Activated CD4-positive, alpha-beta memory T cell treated with anti-CD3 and anti-CD28 coated beads, Interleukin-2, amount 10 ng/mL, durations not matched to agents 7 days and 5 days (primary cell): ENCODE measurements at regions of chr6 and their contacts with region 1.

Region 1: DNA sequence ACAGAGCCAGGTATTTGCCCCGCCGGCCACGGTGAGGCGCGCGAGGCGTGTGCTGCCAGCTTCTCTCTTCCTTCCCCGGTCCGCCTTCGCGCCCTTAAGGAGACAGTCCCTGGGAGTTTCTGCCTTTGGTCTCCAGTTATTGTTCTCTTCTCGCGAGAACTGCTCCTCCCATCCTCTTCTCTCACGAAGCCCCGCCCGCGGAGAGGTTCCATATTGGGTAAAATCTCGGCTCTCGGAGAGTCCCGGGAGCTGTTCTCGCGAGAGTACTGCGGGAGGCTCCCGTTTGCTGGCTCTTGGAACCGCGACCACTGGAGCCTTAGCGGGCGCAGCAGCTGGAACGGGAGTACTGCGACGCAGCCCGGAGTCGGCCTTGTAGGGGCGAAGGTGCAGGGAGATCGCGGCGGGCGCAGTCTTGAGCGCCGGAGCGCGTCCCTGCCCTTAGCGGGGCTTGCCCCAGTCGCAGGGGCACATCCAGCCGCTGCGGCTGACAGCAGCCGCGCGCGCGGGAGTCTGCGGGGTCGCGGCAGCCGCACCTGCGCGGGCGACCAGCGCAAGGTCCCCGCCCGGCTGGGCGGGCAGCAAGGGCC is at the start of gene MAPK14:
- DNase-seq: peak; percentile 99
- H3K4me3 Mint-ChIP-seq: peak within 1 kb of the TSS; percentile 83
- H3K27ac Mint-ChIP-seq: peak within 1 kb of the TSS; percentile 89
- H3K4me1 Mint-ChIP-seq: peaks cover 37% of the 10 kb centered on the region
- H3K27me3 Mint-ChIP-seq: peaks cover 24% of the 10 kb centered on the region
- total RNA-seq, gene MAPK14: 71.4 to 72.2 TPM

Region 2: GRCh38 chr6:35920793-35921732 is 106.5 kb before region 1 on chr6 and contains the start of gene SRPK1:
- CTCF ChIA-PET with region 1: interaction called, 5 read pairs
- POLR2A ChIA-PET with region 1: interaction called, 22 read pairs
- DNase-seq: peak; percentile 90
- H3K4me3 Mint-ChIP-seq: peak within 1 kb of the TSS; percentile 95
- H3K27ac Mint-ChIP-seq: peak within 1 kb of the TSS; percentile 90
- H3K4me1 Mint-ChIP-seq: peaks cover 41% of the 10 kb centered on the region
- H3K27me3 Mint-ChIP-seq: no peaks in the 10 kb centered on the region
- total RNA-seq, gene SRPK1: 83.0 to 85.4 TPM

Region 3: GRCh38 chr6:36073587-36073986 is 46.0 kb after region 1 on chr6:
- CTCF ChIA-PET with region 1: interaction called, 11 read pairs
- POLR2A ChIA-PET with region 1: interaction called, 5 read pairs
- DNase-seq: no peak
- H3K4me3 Mint-ChIP-seq: no peak overlapping the region
- H3K27ac Mint-ChIP-seq: no peak overlapping the region
- H3K4me1 Mint-ChIP-seq: peaks cover 3% of the 10 kb centered on the region
- H3K27me3 Mint-ChIP-seq: no peaks in the 10 kb centered on the region

Region 4: DNA sequence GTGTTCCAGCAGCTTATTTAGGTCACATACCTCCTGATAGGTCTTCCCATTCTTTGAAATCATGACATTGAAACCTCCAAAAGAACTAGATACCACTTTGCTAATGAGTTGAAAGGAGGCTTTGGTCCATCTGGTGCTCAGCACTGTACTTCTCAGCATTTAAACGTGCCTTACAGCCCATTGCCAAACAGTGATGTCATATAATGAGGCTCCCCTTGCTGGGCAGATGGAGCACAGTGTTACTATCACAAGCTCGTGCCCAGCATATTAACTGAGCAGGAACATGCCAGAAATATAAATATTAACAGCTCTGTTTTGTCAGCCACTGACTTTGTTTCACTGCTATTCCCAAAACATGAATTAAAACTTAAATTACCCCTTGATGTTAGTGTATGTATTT is 77.2 kb after region 1 on chr6:
- CTCF ChIA-PET with region 1: interaction called, 6 read pairs
- POLR2A ChIA-PET with region 1: interaction called, 24 read pairs
- DNase-seq: no peak
- H3K4me3 Mint-ChIP-seq: no peak overlapping the region
- H3K27ac Mint-ChIP-seq: no peak overlapping the region
- H3K4me1 Mint-ChIP-seq: peaks cover 35% of the 10 kb centered on the region
- H3K27me3 Mint-ChIP-seq: no peaks in the 10 kb centered on the region

Region 5: DNA sequence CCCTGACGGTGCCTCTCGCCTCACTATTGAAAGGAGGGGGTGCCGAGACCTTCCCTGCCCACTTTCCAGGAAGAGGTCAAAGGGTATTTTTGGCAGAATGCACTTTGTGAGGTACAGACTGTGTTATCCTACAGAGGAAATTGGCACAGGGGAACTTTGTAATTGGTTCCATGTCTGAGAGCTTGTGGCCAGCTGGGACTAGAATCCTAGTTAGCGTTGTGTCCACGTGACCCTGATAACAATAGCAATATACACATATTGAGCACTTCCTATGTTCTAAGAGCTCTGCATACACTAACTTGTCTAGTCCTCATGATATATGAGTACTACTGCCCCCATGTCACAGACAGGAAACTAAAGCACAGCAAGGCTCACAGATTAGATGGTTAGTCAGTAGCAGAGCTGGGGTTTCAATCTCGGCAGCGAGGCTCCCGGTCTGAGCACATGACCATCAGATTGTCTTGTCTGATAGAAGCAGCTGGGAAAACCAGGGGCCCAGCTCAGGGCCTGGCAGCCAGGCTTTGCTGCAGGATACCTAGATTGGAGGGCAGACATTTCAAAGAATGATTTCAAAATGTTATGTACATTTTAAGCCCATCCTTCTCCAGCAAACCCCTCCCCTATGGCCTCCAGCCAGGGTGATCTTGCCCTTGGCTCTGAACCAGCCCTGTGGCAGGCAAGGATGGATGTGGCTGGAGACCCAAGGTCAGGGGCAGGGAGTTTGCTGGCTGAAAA is 104.1 kb after region 1 on chr6:
- CTCF ChIA-PET with region 1: interaction called, 13 read pairs
- POLR2A ChIA-PET with region 1: interaction called, 26 read pairs
- DNase-seq: peak; percentile 66
- H3K4me3 Mint-ChIP-seq: peak overlapping the region; percentile 86
- H3K27ac Mint-ChIP-seq: peak overlapping the region; percentile 93
- H3K4me1 Mint-ChIP-seq: peaks cover 45% of the 10 kb centered on the region
- H3K27me3 Mint-ChIP-seq: no peaks in the 10 kb centered on the region

Region 6: GRCh38 chr6:36196880-36197548 is 169.4 kb after region 1 on chr6:
- CTCF ChIA-PET with region 1: interaction called, 15 read pairs
- POLR2A ChIA-PET with region 1: interaction called, 15 read pairs
- DNase-seq: peak; percentile 99
- H3K4me3 Mint-ChIP-seq: peak overlapping the region; percentile 85
- H3K27ac Mint-ChIP-seq: peak overlapping the region; percentile 87
- H3K4me1 Mint-ChIP-seq: peaks cover 33% of the 10 kb centered on the region
- H3K27me3 Mint-ChIP-seq: peaks cover 7% of the 10 kb centered on the region

Region 7: GRCh38 chr6:36323067-36323466 is 295.5 kb after region 1 on chr6:
- CTCF ChIA-PET with region 1: no interaction called
- POLR2A ChIA-PET with region 1: no interaction called
- DNase-seq: no peak
- H3K4me3 Mint-ChIP-seq: no peak overlapping the region
- H3K27ac Mint-ChIP-seq: no peak overlapping the region
- H3K4me1 Mint-ChIP-seq: no peaks in the 10 kb centered on the region
- H3K27me3 Mint-ChIP-seq: peaks cover 15% of the 10 kb centered on the region

Region 8: GRCh38 chr6:36360241-36361054 is 332.9 kb after region 1 on chr6:
- CTCF ChIA-PET with region 1: interaction called, 14 read pairs
- POLR2A ChIA-PET with region 1: interaction called, 4 read pairs
- DNase-seq: peak; percentile 77
- H3K4me3 Mint-ChIP-seq: no peak overlapping the region
- H3K27ac Mint-ChIP-seq: no peak overlapping the region
- H3K4me1 Mint-ChIP-seq: peaks cover 27% of the 10 kb centered on the region
- H3K27me3 Mint-ChIP-seq: peaks cover 6% of the 10 kb centered on the region

Region 9: DNA sequence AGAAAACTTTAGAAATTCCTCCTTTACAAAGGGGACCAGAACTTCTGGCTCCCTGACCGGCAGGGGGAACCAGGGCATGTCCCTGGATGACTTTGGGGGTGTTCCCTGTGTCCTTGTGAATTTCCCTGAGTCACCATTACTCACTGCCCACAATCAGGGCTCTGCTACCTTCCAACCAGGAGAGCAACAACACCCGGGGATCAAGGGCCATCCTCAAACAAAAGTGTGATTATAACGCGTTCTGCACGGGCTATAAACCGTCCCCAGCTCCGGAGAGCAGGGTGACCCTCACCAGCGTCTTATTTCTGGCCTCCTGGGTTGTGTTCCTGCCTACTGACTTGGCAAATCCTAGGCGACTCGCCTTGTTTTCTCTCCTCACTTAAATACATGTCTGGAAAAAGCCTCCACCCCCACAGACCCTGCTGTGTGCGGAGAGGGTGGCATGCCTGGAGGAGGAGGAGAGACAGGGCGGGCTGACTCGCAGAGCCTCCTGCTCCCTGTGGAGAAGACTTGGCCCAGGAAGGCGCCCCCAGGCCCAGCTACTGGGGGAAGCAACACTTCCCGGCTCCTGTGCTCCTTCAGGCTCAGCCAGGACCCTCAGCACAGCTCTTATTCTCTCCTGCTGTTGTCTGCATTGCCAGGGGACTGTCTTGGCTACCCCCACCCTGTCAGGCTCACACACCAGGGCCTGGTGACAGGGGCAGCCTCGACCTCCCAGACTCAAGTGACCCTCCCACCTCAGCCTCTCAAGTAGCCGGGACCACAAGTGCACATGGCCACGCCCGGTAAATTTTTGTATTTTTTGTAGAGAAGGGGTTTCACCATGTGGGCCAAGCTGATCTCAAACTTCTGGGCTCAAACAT is 1032.0 kb after region 1 on chr6:
- CTCF ChIA-PET with region 1: no interaction called
- POLR2A ChIA-PET with region 1: no interaction called
- DNase-seq: no peak
- H3K4me3 Mint-ChIP-seq: no peak overlapping the region
- H3K27ac Mint-ChIP-seq: no peak overlapping the region
- H3K4me1 Mint-ChIP-seq: peaks cover 17% of the 10 kb centered on the region
- H3K27me3 Mint-ChIP-seq: no peaks in the 10 kb centered on the region